Activated CD4-positive, alpha-beta T cell treated with anti-CD3 and anti-CD28 coated beads for 36 hours (primary cell): ENCODE measurements at regions of chr11 and their contacts with region 1.

Region 1: GRCh38 chr11:117807482-117808327 is 10.7 kb upstream of the DSCAML1 start:
- DNase-seq: peak; percentile 87
- ATAC-seq: peak; percentile 56
- H3K4me3 Mint-ChIP-seq: no peak overlapping the region
- H3K27ac Mint-ChIP-seq: no peak overlapping the region
- H3K4me1 Mint-ChIP-seq: peaks cover 15% of the 10 kb centered on the region
- H3K27me3 Mint-ChIP-seq: peaks cover 3% of the 10 kb centered on the region

Region 2: DNA sequence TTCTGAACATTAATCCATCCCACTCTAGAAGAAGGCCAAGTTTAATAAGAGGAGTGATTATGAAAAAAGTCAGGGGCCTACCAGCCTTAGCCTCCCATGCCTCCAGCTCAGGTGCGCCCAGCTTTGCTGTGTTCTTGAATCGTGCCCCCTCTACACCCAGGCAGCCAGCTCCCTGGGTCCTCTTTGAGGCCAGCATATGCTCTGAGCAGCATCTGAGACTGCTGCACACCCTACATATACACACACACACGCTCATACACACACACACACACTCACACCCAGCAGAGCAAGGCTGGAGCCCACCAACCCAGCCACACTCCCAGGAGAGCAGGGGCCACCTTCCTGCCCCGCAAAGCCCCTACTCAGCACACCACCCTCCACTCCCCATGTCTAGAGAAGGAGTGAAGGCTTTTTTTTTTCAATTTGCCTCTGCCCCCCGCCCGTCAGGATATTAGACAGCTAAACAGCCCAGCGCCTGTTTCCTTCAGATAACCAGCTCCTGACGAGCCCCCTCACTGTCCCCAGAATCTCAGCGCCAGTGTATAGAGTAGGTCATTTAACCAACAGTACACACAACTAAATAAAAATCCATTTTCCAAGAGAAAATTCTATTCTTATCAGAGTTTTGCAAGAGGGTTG is 1156.5 kb before region 1 on chr11:
- CTCF ChIA-PET with region 1: no interaction called
- POLR2A ChIA-PET with region 1: interaction called, 10 read pairs
- intact Hi-C with region 1: no loop called
- DNase-seq: no peak
- ATAC-seq: no peak
- H3K4me3 Mint-ChIP-seq: no peak overlapping the region
- H3K27ac Mint-ChIP-seq: no peak overlapping the region
- H3K4me1 Mint-ChIP-seq: no peaks in the 10 kb centered on the region
- H3K27me3 Mint-ChIP-seq: peaks cover 1% of the 10 kb centered on the region

Region 3: GRCh38 chr11:117796872-117797529 is 10.7 kb before region 1 on chr11 and contains the start of gene DSCAML1:
- CTCF ChIA-PET with region 1: interaction called, 11 read pairs
- POLR2A ChIA-PET with region 1: no interaction called
- intact Hi-C with region 1: no loop called
- DNase-seq: peak; percentile 66
- ATAC-seq: peak; percentile 86
- H3K4me3 Mint-ChIP-seq: peak within 1 kb of the TSS; percentile 26
- H3K27ac Mint-ChIP-seq: no peak within 1 kb of the TSS
- H3K4me1 Mint-ChIP-seq: peaks cover 17% of the 10 kb centered on the region
- H3K27me3 Mint-ChIP-seq: peaks cover 44% of the 10 kb centered on the region
- total RNA-seq, gene DSCAML1: 0.05 to 0.67 TPM

Region 4: DNA sequence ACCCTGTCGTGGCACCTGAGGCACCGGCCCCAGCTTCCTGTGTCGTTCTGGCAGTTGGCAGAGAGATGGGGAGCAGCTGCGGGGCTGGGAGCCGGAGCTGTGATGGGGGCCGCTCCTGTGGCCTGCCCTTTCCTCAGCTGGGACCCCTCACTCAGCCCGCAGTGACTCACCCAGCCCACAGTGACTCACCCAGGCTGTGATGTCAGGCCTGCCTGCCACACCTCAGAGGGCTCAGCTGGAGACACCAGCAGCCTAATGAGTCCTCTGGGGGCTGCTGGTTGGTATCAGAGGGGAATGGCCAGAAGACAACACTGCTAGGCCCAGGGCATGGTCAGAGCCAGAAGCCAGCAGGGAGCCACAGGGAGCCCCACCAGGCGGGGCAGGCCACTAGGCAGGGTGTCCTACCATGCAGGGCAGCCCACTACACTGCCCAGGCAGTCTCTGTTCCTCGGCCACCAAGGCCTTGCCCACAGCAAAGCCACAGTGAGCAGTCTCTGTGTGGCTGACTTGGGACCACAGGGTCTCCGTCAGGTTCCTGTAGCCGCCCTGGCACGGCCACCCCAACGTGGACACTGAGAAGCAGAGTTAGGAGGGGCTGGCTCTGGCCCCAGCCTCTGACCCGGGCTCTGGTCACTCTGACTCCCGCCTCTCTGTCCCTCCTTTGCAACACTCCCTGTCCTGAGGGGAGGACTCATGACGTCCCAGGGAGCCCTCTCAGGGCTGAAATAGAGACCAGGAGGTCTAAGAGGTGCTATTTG is 21.1 kb after region 1 on chr11:
- CTCF ChIA-PET with region 1: interaction called, 67 read pairs
- POLR2A ChIA-PET with region 1: no interaction called
- intact Hi-C with region 1: no loop called
- DNase-seq: peak; percentile 91
- ATAC-seq: peak; percentile 96
- H3K4me3 Mint-ChIP-seq: no peak overlapping the region
- H3K27ac Mint-ChIP-seq: peak overlapping the region; percentile 78
- H3K4me1 Mint-ChIP-seq: peaks cover 41% of the 10 kb centered on the region
- H3K27me3 Mint-ChIP-seq: no peaks in the 10 kb centered on the region

Region 5: DNA sequence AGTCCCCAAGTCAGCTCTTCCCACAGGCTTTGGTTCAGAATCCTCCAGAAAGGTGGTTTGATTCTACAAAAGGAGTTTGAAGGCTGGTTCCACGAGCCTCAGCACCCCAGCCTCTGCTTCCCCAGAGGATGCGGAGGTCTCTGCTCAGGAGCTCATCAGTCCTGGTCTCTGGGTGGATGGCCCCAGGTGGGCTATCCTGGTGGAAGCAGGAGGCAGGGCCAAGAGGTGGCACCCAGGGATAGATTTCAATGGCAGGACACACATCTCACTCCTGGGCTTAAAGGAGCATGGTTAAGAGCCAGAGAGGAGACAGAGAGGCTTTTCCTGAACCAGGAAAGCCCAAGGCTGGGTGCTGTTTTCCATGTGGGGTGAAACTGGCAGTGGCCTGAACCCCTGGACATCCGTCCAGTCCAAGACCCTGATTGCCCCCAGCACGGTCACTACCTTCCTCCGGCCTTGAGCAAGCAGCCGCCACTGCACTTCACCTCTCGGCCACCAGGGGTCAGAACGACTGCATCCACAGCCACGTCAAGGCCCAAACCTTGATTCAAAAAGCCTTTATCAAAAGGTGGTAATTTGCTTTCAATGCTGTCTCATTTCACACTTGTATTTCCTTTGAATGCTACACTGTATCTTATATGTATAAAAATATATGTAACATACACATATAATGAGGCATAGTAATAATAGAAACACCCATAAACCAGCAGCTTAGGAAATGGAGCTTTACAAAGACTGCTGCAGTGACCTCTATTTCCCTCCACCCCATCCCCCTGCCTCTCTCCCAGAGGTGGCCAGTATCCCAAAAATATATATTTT is 36.2 kb after region 1 on chr11:
- CTCF ChIA-PET with region 1: interaction called, 30 read pairs
- POLR2A ChIA-PET with region 1: no interaction called
- intact Hi-C with region 1: loop called in 1 of 2 experiments (anchors 1 kb)
- DNase-seq: peak; percentile 91
- ATAC-seq: peak; percentile 89
- H3K4me3 Mint-ChIP-seq: no peak overlapping the region
- H3K27ac Mint-ChIP-seq: no peak overlapping the region
- H3K4me1 Mint-ChIP-seq: no peaks in the 10 kb centered on the region
- H3K27me3 Mint-ChIP-seq: no peaks in the 10 kb centered on the region

Region 6: DNA sequence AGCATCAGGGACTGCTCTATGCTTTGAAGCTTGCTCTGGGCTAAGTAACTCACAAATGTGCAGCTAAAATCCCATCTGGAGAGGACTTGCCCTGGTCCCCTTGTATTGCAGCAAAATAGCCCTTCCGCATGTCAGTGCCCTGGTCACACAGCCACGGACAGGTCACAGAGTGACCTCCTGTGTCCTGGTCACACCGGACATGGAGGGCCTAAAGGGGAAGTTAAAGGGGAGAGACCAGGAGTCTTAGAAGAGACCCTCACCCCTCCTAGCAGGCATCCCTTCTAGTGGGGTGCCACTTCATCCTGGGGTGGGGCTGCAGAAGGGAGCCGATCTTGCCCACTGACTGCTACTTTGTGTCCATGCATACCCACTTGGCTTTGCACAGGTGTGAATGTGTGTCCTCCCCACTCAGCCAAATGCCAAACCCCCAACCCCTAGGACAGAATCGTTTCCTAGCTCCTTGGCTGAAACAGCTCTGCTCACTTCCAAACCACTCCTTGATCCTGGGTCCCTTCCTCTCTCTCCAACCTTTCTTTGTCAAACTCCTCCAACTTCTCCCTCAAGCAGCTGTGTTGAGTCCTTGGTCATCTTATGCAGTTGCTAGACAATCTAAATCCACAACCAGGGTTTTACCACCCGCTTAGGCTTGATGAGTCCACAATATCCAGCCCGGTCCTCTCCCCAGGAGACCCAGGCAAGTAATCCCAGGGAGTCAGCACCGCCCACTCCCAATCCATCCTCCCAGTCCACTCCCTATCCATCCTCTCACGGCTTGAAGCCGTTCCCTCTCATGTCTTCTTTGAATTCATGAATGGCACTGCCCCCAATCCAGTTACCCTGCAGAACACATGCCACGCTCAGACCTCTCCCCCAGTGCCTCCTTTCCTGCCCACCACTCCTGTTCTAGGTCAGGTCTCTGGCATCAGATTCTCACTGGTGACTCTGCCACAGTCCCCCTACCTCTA is 72.1 kb after region 1 on chr11:
- CTCF ChIA-PET with region 1: no interaction called
- POLR2A ChIA-PET with region 1: no interaction called
- intact Hi-C with region 1: no loop called
- DNase-seq: no peak
- ATAC-seq: no peak
- H3K4me3 Mint-ChIP-seq: no peak overlapping the region
- H3K27ac Mint-ChIP-seq: no peak overlapping the region
- H3K4me1 Mint-ChIP-seq: peaks cover 17% of the 10 kb centered on the region
- H3K27me3 Mint-ChIP-seq: peaks cover 37% of the 10 kb centered on the region

Region 7: DNA sequence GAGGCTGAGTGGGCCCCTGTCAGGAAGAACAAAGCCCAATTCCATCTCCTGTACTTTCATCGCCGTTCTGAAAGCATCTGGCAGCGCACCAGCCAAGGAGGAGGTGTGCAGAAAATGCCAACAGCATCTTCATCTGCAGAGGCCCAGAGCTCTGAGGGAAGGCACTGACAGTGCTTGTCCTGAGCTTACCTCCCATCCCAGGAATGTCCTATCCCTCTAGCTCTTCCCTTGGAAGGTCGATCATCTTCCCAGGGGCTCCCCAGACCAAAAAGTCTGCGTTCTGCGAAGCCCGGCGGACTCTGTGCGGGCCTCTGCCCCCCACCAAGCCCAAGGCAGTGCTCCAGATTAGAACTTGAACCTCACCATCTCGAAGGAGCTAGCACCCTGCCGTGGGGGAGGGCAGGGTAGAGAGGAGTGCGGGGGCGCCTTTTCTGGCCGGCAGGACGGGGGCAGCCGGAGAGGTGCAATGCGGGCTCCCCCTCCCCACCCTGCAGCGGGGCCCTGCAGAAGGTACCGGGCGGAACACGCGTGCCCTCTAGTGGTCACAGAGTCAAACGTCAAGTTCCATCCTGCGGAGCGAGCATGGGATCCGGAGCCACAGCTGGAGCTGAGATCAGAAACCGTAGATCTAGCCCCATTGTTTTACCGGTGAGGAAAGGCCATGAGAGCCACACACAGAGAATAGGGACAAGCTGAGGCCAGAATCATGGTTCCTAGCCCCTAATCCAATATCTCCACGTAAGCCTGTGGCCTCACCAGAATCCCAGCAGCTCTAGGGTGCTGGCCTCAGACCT is 363.8 kb after region 1 on chr11:
- CTCF ChIA-PET with region 1: interaction called, 10 read pairs
- POLR2A ChIA-PET with region 1: no interaction called
- intact Hi-C with region 1: loop called in 1 of 2 experiments (anchors 1 kb)
- DNase-seq: peak; percentile 91
- ATAC-seq: peak; percentile 95
- H3K4me3 Mint-ChIP-seq: no peak overlapping the region
- H3K27ac Mint-ChIP-seq: no peak overlapping the region
- H3K4me1 Mint-ChIP-seq: no peaks in the 10 kb centered on the region
- H3K27me3 Mint-ChIP-seq: peaks cover 6% of the 10 kb centered on the region